IMR-90 (cell line): ENCODE measurements at regions of chr1 and their contacts with region 1.

Region 1: DNA sequence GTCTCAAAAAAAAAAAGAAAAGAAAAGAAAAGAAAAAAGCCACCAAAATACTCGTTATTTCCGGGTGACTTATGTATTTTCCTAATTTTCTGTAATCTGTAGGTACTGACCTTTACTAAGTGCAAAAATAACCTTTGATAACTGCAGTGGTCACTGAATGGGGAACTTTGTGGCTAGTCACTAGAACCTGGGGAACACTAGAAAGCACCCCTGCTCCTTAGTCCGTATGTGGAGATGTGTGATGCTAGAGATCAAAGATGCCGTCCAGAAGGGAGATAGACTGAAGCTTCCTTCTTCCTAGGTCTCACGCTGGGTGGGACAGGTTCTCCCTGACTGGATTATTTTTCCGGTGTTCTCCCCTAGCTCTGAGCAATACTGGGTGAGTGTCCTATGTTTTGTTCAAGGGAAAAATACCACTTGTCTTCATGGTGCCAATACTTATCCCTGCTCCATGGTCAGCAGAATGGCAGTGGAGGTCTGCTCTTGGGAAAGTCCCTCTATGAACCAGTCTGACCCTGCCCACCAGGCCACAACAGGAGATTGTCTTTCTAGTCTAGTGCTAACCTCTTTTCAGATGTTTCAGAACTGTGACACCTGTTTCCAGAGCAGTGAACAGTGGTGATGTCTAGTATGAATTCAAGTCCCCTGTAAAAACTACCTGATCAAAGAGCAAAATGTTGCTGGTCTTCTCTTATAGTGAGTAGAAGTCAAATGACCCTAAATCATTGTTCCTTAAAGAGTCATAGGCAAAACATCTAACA is 39.9 kb downstream of the GTF2B start:
- DNase-seq: no peak
- ATAC-seq: no peak
- H3K4me3 ChIP-seq: no peak overlapping the region
- H3K27ac ChIP-seq: no peak overlapping the region
- H3K4me1 ChIP-seq: no peaks in the 10 kb centered on the region
- H3K27me3 ChIP-seq: no peaks in the 10 kb centered on the region
- CTCF ChIP-seq: no peak
- POLR2A ChIP-seq: no peak
- RAD21 ChIP-seq: no peak

Region 2: DNA sequence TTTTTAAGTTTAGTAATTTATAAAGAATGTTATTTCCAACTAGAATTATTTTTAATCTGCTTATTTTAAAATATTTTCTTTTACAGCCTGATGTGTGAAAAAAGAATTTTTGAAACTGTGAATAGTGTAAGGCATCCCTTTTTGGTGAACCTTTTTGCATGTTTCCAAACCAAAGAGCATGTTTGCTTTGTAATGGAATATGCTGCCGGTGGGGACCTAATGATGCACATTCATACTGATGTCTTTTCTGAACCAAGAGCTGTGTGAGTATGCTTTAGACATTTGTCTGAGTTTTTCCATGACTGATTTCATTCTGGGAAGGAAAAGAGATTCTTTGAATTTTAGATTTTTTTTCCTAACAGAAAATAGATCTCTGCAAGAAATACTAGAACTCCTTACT is 38.0 kb before region 1 on chr1:
- CTCF ChIA-PET with region 1: no interaction called
- POLR2A ChIA-PET with region 1: no interaction called
- dilution Hi-C with region 1: no loop called
- in situ Hi-C with region 1: no loop called
- intact Hi-C with region 1: loop called (anchors 5 kb)
- DNase-seq: no peak
- ATAC-seq: no peak
- H3K4me3 ChIP-seq: no peak overlapping the region
- H3K27ac ChIP-seq: no peak overlapping the region
- H3K4me1 ChIP-seq: no peaks in the 10 kb centered on the region
- H3K27me3 ChIP-seq: no peaks in the 10 kb centered on the region
- CTCF ChIP-seq: no peak
- POLR2A ChIP-seq: no peak
- RAD21 ChIP-seq: no peak

Region 3: GRCh38 chr1:88917321-88918025 is 66.0 kb after region 1 on chr1:
- CTCF ChIA-PET with region 1: no interaction called
- POLR2A ChIA-PET with region 1: no interaction called
- dilution Hi-C with region 1: no loop called
- in situ Hi-C with region 1: no loop called
- intact Hi-C with region 1: no loop called
- DNase-seq: no peak
- ATAC-seq: no peak
- H3K4me3 ChIP-seq: no peak overlapping the region
- H3K27ac ChIP-seq: no peak overlapping the region
- H3K4me1 ChIP-seq: no peaks in the 10 kb centered on the region
- H3K27me3 ChIP-seq: no peaks in the 10 kb centered on the region
- CTCF ChIP-seq: no peak
- POLR2A ChIP-seq: no peak
- RAD21 ChIP-seq: no peak